Activated CD4-positive, alpha-beta T cell treated with anti-CD3 and anti-CD28 coated beads, Interleukin-2, amount 10 ng/mL, durations not matched to agents 24 days and 14 days (primary cell): ENCODE measurements at regions of chr17 and their contacts with region 1.

Region 1: DNA sequence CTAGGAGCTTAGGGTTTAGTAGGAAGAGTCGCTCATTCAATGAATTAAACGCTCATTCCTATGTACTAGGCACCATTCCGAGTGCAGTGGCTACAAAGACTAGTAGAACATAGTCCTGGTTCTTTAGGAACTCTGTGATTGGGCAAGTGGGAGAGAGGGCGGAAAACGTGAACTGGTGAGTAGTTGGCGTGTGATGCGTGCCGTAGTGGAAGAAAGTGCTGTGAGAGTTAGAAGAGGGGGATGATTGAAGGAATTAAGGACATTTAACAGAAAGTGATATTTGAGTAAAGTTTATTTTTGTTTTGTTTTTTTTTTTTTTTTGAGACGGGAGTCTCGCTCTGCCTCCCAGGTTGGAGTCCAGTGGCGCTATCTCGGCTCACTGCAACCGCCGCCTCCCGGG is 7.9 kb upstream of the SLFN14 start:
- DNase-seq: peak; percentile 75
- H3K4me3 Mint-ChIP-seq: peak overlapping the region; percentile 83
- H3K27ac Mint-ChIP-seq: peak overlapping the region; percentile 89
- H3K4me1 Mint-ChIP-seq: peaks cover 21% of the 10 kb centered on the region
- H3K27me3 Mint-ChIP-seq: peaks cover 14% of the 10 kb centered on the region

Region 2: DNA sequence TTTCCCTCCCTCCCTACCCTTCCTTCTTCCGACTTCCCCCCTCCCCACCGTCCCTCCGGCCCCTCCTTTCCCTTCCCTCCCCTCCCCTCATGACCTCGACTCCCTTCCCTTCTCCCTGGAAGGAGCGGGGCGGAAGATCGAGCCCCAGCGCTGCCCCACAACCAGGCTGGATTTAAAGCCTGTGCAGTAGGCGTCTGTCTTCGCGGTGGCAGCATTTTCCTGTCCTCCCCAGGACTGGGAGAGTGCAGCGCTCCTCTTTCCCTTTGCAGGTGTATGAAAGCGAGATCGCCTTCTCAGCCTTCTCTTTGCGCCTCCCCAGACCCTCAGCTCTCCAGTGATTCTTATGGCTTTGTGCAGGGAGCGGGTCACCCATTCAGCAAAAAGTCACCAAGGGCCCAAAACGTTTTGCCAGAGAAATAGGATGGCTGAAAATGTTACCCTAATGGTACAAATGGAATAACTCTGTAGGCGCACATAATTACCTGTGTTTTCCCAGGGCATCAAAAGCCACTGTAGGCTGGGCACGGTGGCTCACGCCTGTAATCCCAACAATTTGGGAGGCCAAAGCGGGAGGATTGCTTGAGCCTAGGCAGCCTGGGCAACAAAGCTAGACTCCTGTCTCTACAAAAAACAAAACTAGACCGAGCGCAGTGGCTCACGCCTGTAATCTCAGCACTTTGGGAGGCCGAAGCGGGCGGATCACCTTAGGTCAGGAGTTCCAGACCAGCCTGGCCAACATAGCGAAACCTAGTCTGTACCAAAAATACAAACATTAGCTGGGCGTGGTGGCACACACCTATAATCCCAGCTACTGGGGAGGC is 71.9 kb before region 1 on chr17:
- intact Hi-C with region 1: no loop called
- DNase-seq: no peak
- H3K4me3 Mint-ChIP-seq: peak overlapping the region; percentile 39
- H3K27ac Mint-ChIP-seq: peak overlapping the region; percentile 59
- H3K4me1 Mint-ChIP-seq: peaks cover 57% of the 10 kb centered on the region
- H3K27me3 Mint-ChIP-seq: no peaks in the 10 kb centered on the region

Region 3: DNA sequence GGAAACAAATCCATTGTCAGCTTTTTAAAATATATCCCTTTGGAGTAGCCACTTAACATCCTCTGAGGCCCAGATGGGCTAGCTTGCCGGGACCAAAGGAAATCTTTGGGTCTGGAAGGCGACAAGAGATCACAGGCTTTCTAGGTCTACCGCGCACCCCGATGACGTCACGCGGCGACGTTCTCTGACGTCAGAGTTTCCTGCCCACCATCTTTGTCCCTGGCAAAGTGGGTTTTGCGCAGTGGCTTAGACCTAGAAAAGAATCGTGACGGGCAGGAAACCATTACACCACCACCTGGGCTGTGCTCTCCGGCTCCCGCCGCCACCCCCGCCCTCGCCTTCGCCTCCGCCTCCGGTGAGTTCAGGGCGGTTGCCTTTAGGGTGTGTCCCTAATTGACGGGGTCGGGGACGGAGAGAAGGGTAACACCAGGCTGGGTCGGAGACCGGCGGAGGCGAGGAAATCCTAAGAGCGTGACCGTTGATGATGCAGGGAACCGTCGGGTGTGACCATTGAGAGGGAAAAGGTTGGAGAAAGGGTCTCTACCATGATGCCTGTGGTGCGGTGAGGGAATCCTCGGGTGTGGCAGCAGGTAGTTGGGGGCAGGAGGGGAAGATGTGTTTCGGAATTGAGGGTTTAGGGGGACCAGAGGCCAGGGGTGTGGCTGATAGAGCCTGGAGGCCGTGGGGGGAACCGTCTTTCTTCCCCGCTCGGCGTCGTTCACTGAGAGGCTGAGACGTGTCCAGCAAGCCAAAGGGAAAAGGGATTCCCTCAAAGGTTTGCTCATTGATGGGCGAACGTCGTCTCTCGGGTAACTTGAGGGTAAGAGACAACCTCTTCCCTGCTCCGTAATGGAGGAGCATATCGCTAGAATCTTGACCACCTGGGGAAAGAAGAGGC is 18.8 kb after region 1 on chr17 and contains the start of gene AP2B1:
- intact Hi-C with region 1: loop called (anchors 1 kb)
- DNase-seq: peak; percentile 99
- H3K4me3 Mint-ChIP-seq: peak within 1 kb of the TSS; percentile 98
- H3K27ac Mint-ChIP-seq: peak within 1 kb of the TSS; percentile 98
- H3K4me1 Mint-ChIP-seq: peaks cover 24% of the 10 kb centered on the region
- H3K27me3 Mint-ChIP-seq: peaks cover 12% of the 10 kb centered on the region
- total RNA-seq, gene AP2B1: 164 and 172 TPM in 2 replicates